ENCODE measurements at regions of chr18 and their contacts with region 1.

Region 1: GRCh38 chr18:6729247-6730091 is at the start of gene ARHGAP28:
- DNase-seq: peak; percentile 80 to 95 (median 87)
- ATAC-seq: peak; percentile 94 to 97 (median 96)
- H3K4me3 ChIP-seq: peak within 1 kb of the TSS; percentile 54 to 91 (median 70)
- H3K27ac ChIP-seq: peak within 1 kb of the TSS; percentile 58 to 88 (median 84)
- H3K4me1 ChIP-seq: peaks cover 0 to 17% (median 5%) of the 10 kb centered on the region in 12 donors
- H3K27me3 ChIP-seq: no peaks in the 10 kb centered on the region
- CTCF ChIP-seq: peak in 10 of 12 donors; percentile 15 to 59 (median 41)
- POLR2A ChIP-seq: peak in 1 of 2 donors; percentile 39
- total RNA-seq, gene ARHGAP28: 0.42 to 7.5 (median 1.8) TPM

Region 2: DNA sequence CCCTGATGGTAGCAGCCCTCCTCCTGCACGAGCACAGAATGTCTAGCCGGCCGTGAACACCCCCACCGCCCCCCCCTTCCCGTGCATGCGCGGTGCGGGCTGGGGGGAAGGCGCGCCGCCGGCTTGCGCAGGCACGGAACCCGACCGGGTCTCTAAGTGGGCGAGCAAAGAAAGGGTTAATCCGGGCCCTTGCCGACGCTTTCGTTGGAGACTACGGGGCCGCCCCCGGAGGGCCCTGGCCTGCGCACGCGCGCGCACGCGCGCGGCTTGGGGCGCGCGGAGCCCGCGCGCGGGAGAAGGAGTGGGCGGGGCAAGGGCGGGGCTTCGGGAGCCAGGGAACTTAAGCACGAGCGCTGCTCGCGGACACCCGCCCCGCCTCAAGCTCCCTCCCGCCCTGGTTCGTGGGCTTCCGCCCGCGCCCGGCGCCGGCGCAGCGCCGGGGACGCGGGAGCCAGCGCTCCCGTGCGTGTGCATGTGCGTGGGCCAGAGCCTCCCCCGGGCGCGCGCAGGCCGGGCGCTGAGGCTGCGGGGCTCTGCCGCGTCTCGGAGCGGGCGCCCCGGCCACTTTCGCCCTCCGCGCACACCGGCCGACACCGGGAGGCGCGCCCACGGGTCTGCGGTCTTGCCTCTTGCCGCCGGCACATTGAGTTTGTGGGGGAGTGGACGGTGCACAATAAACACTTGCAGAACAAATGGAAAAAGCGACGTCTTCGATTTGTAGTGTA is 1433.3 kb before region 1 on chr18:
- intact Hi-C with region 1: loop called in 1 of 10 experiments (anchors 10 kb)
- DNase-seq: peak; percentile 96 to 98 (median 97)
- ATAC-seq: peak; percentile 86 to 93 (median 90)
- H3K4me3 ChIP-seq: peak overlapping the region; percentile 42 to 97 (median 78)
- H3K27ac ChIP-seq: peak overlapping the region; percentile 92 to 100 (median 97)
- H3K4me1 ChIP-seq: peaks cover 0 to 19% (median 12%) of the 10 kb centered on the region in 12 donors
- H3K27me3 ChIP-seq: peaks cover 0 to 4% (median 0%) of the 10 kb centered on the region in 9 donors
- CTCF ChIP-seq: no peak
- POLR2A ChIP-seq: peak in 1 of 2 donors; percentile 48

Region 3: DNA sequence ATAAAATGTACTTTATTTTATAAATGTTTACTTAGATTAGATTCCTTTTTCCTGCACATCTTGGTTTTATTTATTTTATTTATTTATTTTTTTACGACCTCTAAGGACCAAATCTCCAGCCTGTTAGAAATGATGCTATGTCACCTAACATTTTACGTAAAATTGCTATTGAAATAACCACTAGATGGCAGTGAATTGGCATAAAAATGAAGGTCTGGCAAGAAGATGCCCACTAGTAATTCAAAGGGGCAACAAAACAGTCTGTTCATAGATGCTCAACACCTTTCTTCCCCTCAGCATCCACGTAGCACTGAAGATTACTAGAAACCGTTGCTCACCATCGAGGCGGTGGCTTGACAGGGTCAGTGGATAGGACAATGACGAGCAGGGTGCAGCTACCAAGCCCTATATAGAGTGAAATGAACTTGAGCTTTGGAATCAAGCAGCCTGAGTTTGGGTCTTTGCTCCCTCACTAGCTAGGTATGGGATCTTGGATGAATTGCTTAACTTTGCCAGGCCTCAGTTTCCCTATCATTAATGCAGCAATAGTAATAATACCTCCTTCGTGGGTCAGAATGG is 186.1 kb before region 1 on chr18:
- intact Hi-C with region 1: loop called in 6 of 10 experiments (anchors 5 to 10 kb)
- DNase-seq: no peak
- ATAC-seq: no peak
- H3K4me3 ChIP-seq: no peak overlapping the region
- H3K27ac ChIP-seq: no peak overlapping the region
- H3K4me1 ChIP-seq: no peaks in the 10 kb centered on the region
- H3K27me3 ChIP-seq: no peaks in the 10 kb centered on the region
- CTCF ChIP-seq: peak; percentile 34 to 75 (median 60)
- POLR2A ChIP-seq: no peak

Region 4: GRCh38 chr18:6795307-6795706 is 65.8 kb after region 1 on chr18:
- intact Hi-C with region 1: loop called in 1 of 10 experiments (anchors 10 kb)
- DNase-seq: no peak
- ATAC-seq: no peak
- H3K4me3 ChIP-seq: no peak overlapping the region
- H3K27ac ChIP-seq: no peak overlapping the region
- H3K4me1 ChIP-seq: no peaks in the 10 kb centered on the region
- H3K27me3 ChIP-seq: no peaks in the 10 kb centered on the region
- CTCF ChIP-seq: no peak
- POLR2A ChIP-seq: no peak

Region 5: DNA sequence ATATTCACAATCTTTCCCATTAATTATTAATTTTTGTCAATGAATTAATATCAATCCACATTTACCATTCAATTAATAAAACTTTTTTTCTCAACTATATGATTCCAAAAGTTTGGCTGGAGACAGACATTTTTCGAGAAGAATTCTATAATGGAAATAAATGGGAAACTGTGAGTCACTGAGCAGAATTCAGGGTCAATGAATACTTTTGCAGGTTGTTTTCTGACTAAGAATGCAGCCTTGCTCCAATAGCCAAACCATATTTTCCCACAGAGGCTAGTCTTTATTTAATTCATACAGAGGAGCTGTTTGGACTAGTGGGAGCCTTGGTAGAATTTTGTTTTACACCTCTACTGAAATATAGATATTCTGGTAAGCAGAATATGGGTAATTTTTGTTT is 82.3 kb after region 1 on chr18:
- intact Hi-C with region 1: no loop called
- DNase-seq: no peak
- ATAC-seq: no peak
- H3K4me3 ChIP-seq: no peak overlapping the region
- H3K27ac ChIP-seq: no peak overlapping the region
- H3K4me1 ChIP-seq: no peaks in the 10 kb centered on the region
- H3K27me3 ChIP-seq: no peaks in the 10 kb centered on the region
- CTCF ChIP-seq: no peak
- POLR2A ChIP-seq: no peak

Region 6: DNA sequence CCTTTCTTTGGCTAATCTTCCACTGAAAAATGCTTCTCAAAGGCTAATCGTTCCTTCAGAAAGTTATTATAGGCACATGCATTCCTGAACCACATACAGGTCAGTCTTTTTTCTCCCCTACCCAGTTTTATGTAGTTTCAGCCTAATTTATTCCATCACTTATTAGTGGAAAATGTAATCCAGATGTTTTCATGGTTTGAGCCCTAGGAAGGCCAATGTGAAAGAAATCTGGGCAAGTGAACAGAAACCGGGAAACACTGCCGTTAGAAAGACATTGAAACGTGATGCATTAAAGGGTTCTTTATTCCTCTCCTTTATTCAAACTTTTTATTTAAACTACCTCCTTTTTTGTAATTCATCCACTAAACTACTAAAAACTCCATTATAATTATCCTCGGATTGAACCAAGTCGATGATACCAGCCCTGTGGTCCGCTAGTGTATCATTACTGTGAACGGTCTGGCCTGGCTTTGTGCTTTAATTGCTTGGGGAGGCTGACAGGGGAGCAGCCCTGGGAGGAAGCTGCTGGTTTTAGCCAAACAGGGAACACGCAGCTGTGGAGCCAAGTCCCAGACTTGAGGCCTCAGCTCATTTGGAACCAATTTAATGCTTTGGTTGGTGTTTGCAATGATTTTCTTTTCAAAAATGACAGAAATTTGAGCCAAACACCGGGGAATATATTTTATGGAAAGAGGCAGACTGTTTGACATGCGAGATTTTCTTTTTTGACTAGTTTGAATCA is 149.3 kb after region 1 on chr18:
- intact Hi-C with region 1: loop called in 6 of 10 experiments (anchors 10 kb)
- DNase-seq: peak in 1 of 5 donors; percentile 39
- ATAC-seq: peak in 1 of 4 donors; percentile 45
- H3K4me3 ChIP-seq: no peak overlapping the region
- H3K27ac ChIP-seq: no peak overlapping the region
- H3K4me1 ChIP-seq: peaks cover 0 to 10% (median 0%) of the 10 kb centered on the region in 12 donors
- H3K27me3 ChIP-seq: no peaks in the 10 kb centered on the region
- CTCF ChIP-seq: no peak
- POLR2A ChIP-seq: no peak

Measured in heart left ventricle (tissue), 16 donors.